ENCODE measurements at regions of chr4 and their contacts with region 1.

Region 1: GRCh38 chr4:123832173-123833026 is 435.8 kb downstream of the SPRY1 start:
- DNase-seq: peak; percentile 39 to 77 (median 75)
- ATAC-seq: peak; percentile 90 to 93 (median 92)
- H3K4me3 ChIP-seq: peak overlapping the region in 1 of 12 donors; percentile 9
- H3K27ac ChIP-seq: peak overlapping the region; percentile 79 to 99 (median 89)
- H3K4me1 ChIP-seq: peaks cover 0 to 54% (median 33%) of the 10 kb centered on the region in 12 donors
- H3K27me3 ChIP-seq: no peaks in the 10 kb centered on the region
- CTCF ChIP-seq: no peak
- POLR2A ChIP-seq: no peak

Region 2: DNA sequence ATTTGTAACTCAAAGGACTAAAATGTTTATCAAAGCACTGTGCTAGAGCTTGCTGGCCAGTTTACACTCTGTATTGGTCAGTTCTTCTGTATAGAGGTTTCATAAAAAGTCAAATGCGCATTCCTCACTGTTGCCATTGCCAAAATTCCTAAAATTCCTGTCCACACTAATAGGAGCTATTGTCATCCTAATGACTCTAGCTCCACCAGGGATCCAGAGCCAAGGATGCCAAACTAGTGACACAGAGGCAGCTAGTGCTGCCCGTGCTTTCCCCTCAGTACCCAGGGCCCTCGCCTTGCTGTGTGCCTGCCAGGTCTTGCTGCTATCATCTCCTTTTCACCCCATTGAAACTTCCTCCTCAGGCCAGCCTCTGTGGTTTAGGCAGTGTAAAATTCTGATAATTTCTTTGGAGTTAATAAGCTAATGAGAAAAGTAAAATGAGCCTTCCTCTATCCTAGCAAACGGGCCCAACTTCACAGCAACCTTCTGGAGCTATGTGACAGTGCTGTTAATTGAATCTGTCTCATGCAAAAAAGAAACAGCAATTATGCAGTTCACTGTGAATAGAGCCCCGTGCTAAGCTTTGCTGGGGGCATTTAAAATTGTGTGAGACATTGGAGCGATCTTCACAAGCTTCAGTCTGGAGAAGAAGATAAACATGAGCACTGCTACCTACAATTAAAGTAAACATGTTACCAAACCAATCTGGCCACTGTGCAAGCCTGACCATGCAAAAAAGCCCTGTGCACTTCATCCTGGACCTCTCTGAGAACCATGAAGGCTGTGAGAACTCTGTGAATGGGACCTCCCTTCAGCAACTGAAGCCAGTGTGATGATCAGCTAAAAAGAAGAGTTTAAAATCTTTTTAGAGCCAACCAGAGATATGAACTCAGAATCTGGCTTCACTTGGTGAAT is 1048.8 kb before region 1 on chr4:
- intact Hi-C with region 1: loop called in 1 of 10 experiments (anchors 10 kb)
- DNase-seq: peak; percentile 70 to 86 (median 73)
- ATAC-seq: peak; percentile 100
- H3K4me3 ChIP-seq: peak overlapping the region in 1 of 12 donors; percentile 18
- H3K27ac ChIP-seq: peak overlapping the region; percentile 46 to 86 (median 80)
- H3K4me1 ChIP-seq: peaks cover 0 to 20% (median 13%) of the 10 kb centered on the region in 12 donors
- H3K27me3 ChIP-seq: no peaks in the 10 kb centered on the region
- CTCF ChIP-seq: no peak
- POLR2A ChIP-seq: no peak

Region 3: GRCh38 chr4:123785538-123785937 is 46.9 kb before region 1 on chr4:
- intact Hi-C with region 1: loop called in 5 of 10 experiments (anchors 5 kb)
- DNase-seq: peak; percentile 49 to 68 (median 63)
- ATAC-seq: peak; percentile 37 to 90 (median 74)
- H3K4me3 ChIP-seq: no peak overlapping the region
- H3K27ac ChIP-seq: peak overlapping the region; percentile 1 to 88 (median 74)
- H3K4me1 ChIP-seq: peaks cover 0 to 55% (median 11%) of the 10 kb centered on the region in 12 donors
- H3K27me3 ChIP-seq: no peaks in the 10 kb centered on the region
- CTCF ChIP-seq: no peak
- POLR2A ChIP-seq: no peak

Region 4: GRCh38 chr4:123893011-123893981 is 60.9 kb after region 1 on chr4:
- intact Hi-C with region 1: loop called in 1 of 10 experiments (anchors 5 kb)
- DNase-seq: no peak
- ATAC-seq: peak; percentile 46 to 82 (median 63)
- H3K4me3 ChIP-seq: no peak overlapping the region
- H3K27ac ChIP-seq: peak overlapping the region in 11 of 12 donors; percentile 6 to 75 (median 62)
- H3K4me1 ChIP-seq: peaks cover 0 to 50% (median 21%) of the 10 kb centered on the region in 12 donors
- H3K27me3 ChIP-seq: no peaks in the 10 kb centered on the region
- CTCF ChIP-seq: no peak
- POLR2A ChIP-seq: no peak

Region 5: GRCh38 chr4:123921339-123921738 is 88.9 kb after region 1 on chr4:
- intact Hi-C with region 1: no loop called
- DNase-seq: no peak
- ATAC-seq: no peak
- H3K4me3 ChIP-seq: no peak overlapping the region
- H3K27ac ChIP-seq: peak overlapping the region in 3 of 12 donors; percentile 12 to 31 (median 22)
- H3K4me1 ChIP-seq: peaks cover 0 to 22% (median 9%) of the 10 kb centered on the region in 12 donors
- H3K27me3 ChIP-seq: no peaks in the 10 kb centered on the region
- CTCF ChIP-seq: no peak
- POLR2A ChIP-seq: no peak